Dorsolateral prefrontal cortex (tissue), 120 donors: ENCODE measurements at regions of chr1 and their contacts with region 1.

Region 1: GRCh38 chr1:213051127-213051880 is at the start of gene RPS6KC1:
- DNase-seq: peak; percentile 79 to 93 (median 88)
- H3K4me3 ChIP-seq: peak within 1 kb of the TSS; percentile 58 to 99 (median 92)
- H3K27ac ChIP-seq: peak within 1 kb of the TSS in 58 of 59 donors; percentile 32 to 92 (median 77)
- H3K27me3 ChIP-seq: peaks cover 0 to 26% (median 0%) of the 10 kb centered on the region in 45 donors
- CTCF ChIP-seq: peak in 24 of 56 donors; percentile 8 to 47 (median 21)
- total RNA-seq, gene RPS6KC1: 45.1 to 104 (median 72.7) TPM

Region 2: DNA sequence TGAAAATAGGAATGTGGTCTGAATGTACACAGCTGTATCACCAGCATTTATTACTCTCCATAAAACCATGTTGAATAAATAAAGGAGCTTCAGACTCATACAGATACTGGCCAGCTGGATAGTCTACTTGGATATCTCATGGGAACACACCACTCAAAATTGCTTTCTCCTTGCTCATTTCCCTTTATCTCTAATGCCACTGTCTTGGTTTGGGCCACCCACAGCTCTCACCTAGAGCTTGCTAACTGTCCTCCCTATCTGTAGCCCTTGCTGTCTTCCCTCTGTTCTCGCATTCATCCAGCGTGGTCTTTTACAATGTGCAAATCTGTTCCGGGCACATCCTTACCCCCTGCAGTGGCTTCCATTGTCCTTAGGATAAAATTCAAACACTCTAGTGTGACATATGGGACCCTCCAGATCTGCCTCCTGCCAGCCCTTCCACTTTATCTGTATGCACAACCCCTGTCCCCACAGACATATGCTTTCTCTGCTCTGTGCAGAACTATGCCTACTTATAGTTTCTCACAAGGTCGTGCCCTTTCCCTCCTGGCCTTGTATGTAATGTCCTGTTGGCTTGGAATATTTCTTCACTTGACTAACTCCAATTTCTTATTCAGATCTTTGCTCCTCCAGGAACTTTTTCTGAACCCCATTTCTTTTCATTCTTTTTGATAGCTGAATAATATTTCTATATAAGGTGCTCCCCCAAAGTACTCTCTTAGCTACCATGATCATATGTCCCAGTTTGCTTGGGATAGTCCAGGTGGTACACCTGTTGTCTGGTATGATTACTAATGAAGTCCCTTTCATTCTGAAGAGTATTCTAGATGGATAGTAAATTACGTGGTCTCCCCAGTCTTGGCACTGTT is 190.4 kb before region 1 on chr1:
- intact Hi-C with region 1: no loop called
- DNase-seq: no peak
- H3K4me3 ChIP-seq: peak overlapping the region in 36 of 59 donors; percentile 0 to 98 (median 86)
- H3K27ac ChIP-seq: no peak overlapping the region
- H3K27me3 ChIP-seq: no peaks in the 10 kb centered on the region
- CTCF ChIP-seq: no peak

Region 3: GRCh38 chr1:212899845-212900244 is 151.5 kb before region 1 on chr1:
- intact Hi-C with region 1: no loop called
- DNase-seq: no peak
- H3K4me3 ChIP-seq: no peak overlapping the region
- H3K27ac ChIP-seq: no peak overlapping the region
- H3K27me3 ChIP-seq: no peaks in the 10 kb centered on the region
- CTCF ChIP-seq: no peak

Region 4: DNA sequence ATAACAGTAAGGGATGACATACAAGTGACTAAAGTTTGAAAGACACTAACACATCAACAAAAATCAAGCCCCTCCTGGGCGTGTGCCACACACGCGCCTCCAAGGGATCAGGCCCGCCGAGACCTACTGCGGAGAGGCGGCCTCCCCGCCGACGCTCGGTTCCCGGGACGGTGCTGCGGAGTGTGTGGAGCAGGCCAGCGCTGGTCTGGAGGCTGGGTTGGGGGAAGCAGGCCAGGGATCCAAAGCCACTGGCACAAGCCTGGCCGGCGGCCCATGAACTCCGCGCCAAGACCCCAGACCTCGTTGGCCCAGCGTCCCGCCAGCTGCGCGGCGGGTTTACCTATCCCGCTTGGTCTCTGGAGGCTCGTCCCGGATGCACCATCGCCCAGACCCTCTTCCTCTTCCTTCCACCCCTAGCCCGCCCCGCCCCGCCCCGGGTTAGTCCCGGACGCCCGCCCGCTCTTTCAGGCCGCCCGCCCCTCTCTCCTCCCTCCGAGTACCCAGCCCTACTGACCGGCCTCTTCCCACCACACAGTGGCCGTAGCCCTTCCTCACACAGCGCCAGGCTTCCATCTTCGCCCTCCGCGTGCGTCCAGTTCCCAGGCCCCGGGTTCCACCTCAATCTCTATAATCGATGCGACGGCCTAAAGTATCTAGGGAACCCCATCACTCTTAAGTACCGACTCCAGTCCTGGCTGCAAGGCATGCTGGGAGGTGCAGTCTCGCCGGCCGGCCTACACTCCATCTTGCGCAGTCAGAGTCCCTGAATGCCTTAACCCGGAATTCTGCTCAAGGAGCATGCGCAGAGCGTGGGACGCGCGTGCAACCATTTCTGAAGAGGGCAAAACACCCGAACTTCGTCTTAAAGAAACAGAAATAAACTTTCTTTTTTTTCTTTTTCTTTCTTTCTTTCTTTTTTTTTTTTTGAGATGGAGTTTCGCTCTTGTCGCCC is 35.9 kb before region 1 on chr1 and contains the start of gene ANGEL2:
- intact Hi-C with region 1: loop called (anchors 1 to 5 kb)
- DNase-seq: peak; percentile 96 to 99 (median 98)
- H3K4me3 ChIP-seq: peak within 1 kb of the TSS; percentile 65 to 99 (median 88)
- H3K27ac ChIP-seq: peak within 1 kb of the TSS; percentile 53 to 97 (median 91)
- H3K27me3 ChIP-seq: no peaks in the 10 kb centered on the region
- CTCF ChIP-seq: peak in 16 of 56 donors; percentile 5 to 50 (median 24)
- total RNA-seq, gene ANGEL2: 42.5 to 77.5 (median 57.2) TPM